ENCODE measurements at regions of chr17 and their contacts with region 1.

Region 1: GRCh38 chr17:6941989-6942388 is 53.9 kb upstream of the ALOX12 start:
- DNase-seq: no peak
- ATAC-seq: no peak
- H3K4me3 ChIP-seq: no peak overlapping the region
- H3K27ac ChIP-seq: no peak overlapping the region
- H3K4me1 ChIP-seq: no peaks in the 10 kb centered on the region
- H3K27me3 ChIP-seq: no peaks in the 10 kb centered on the region
- CTCF ChIP-seq: no peak

Region 2: GRCh38 chr17:6323582-6324356 is 618.2 kb before region 1 on chr17:
- intact Hi-C with region 1: no loop called
- DNase-seq: no peak
- ATAC-seq: peak in 1 of 4 donors; percentile 38
- H3K4me3 ChIP-seq: no peak overlapping the region
- H3K27ac ChIP-seq: no peak overlapping the region
- H3K4me1 ChIP-seq: no peaks in the 10 kb centered on the region
- H3K27me3 ChIP-seq: peaks cover 0 to 34% (median 1%) of the 10 kb centered on the region in 3 donors
- CTCF ChIP-seq: no peak

Region 3: GRCh38 chr17:6969323-6969726 is 27.3 kb after region 1 on chr17:
- intact Hi-C with region 1: loop called in 1 of 2 experiments (anchors 1 kb)
- DNase-seq: no peak
- ATAC-seq: no peak
- H3K4me3 ChIP-seq: no peak overlapping the region
- H3K27ac ChIP-seq: no peak overlapping the region
- H3K4me1 ChIP-seq: no peaks in the 10 kb centered on the region
- H3K27me3 ChIP-seq: no peaks in the 10 kb centered on the region
- CTCF ChIP-seq: no peak